GM12878 (cell line): ENCODE measurements at regions of chr9 and their contacts with region 1.

Region 1: GRCh38 chr9:15612962-15613361 is 60.1 kb downstream of the CCDC171 start:
- DNase-seq: no peak
- ATAC-seq: peak; percentile 91
- H3K4me3 ChIP-seq: no peak overlapping the region
- H3K27ac ChIP-seq: no peak overlapping the region
- H3K4me1 ChIP-seq: no peaks in the 10 kb centered on the region
- H3K27me3 ChIP-seq: no peaks in the 10 kb centered on the region
- CTCF ChIP-seq: no peak
- EP300 ChIP-seq: peak in 1 of 2 experiments; percentile 55; a peak in 1 of 4 replicates
- POLR2A ChIP-seq: no peak
- RAD21 ChIP-seq: no peak

Region 2: GRCh38 chr9:15211160-15211814 is 401.7 kb before region 1 on chr9:
- CTCF ChIA-PET with region 1: interaction called, 25 read pairs
- POLR2A ChIA-PET with region 1: interaction called, 3 read pairs
- RAD21 ChIA-PET with region 1: no interaction called
- SMC1A ChIA-PET with region 1: interaction called, 5 read pairs
- in situ Hi-C with region 1: loop called (anchors 10 kb)
- intact Hi-C with region 1: no loop called
- DNase-seq: peak; percentile 30
- ATAC-seq: peak; percentile 86
- H3K4me3 ChIP-seq: no peak overlapping the region
- H3K27ac ChIP-seq: no peak overlapping the region
- H3K4me1 ChIP-seq: no peaks in the 10 kb centered on the region
- H3K27me3 ChIP-seq: no peaks in the 10 kb centered on the region
- CTCF ChIP-seq: peak; percentile 81 to 87 (median 85); a peak in 5 of 6 replicates
- EP300 ChIP-seq: no peak
- POLR2A ChIP-seq: no peak
- RAD21 ChIP-seq: peak; percentile 86

Region 3: DNA sequence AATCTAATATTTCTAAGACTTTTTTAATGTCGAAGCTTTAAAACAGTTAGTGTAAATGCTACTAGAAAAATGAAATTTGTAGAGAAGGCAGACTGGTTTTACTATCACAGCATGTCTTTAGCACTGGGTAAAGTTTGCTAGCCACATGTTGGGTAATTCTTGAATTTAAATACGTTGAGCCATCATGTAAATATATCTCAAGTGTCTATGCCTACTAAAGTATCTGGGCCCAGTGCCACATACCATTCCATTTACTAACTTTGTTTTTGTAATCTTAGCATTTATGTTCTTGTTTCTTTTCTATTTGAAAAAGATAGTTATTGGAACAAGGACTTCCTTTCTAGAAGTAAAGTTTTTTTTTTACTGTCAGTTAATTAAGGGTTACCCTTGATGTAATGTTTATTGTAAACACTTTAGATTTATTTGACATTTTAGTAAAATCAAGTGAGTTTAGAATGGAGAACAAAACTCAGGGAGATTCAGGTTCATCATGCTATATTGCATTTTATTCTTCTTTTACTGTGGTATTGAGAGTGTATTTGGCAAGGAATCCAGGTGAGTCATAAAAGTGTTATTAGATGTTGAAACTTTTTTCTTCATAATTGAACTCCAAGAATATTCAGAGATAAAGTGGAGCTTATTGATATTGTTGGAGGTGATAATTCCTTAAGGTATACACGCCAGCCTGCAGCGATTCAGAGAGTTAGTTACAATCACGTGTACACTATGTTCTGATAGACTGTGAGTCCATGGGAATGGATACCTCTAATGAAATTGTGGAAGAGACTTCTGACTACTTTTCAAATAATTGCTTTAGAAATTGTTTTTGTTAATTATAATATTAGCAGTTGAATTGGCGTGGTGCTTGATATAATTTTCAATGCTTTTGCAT is 122.4 kb after region 1 on chr9:
- CTCF ChIA-PET with region 1: no interaction called
- POLR2A ChIA-PET with region 1: no interaction called
- RAD21 ChIA-PET with region 1: no interaction called
- SMC1A ChIA-PET with region 1: no interaction called
- in situ Hi-C with region 1: no loop called
- intact Hi-C with region 1: no loop called
- DNase-seq: no peak
- ATAC-seq: no peak
- H3K4me3 ChIP-seq: no peak overlapping the region
- H3K27ac ChIP-seq: no peak overlapping the region
- H3K4me1 ChIP-seq: no peaks in the 10 kb centered on the region
- H3K27me3 ChIP-seq: no peaks in the 10 kb centered on the region
- CTCF ChIP-seq: no peak
- EP300 ChIP-seq: no peak
- POLR2A ChIP-seq: no peak
- RAD21 ChIP-seq: no peak